Esophagus muscularis mucosa (tissue), 4 donors: ENCODE measurements at regions of chr10 and their contacts with region 1.

Region 1: DNA sequence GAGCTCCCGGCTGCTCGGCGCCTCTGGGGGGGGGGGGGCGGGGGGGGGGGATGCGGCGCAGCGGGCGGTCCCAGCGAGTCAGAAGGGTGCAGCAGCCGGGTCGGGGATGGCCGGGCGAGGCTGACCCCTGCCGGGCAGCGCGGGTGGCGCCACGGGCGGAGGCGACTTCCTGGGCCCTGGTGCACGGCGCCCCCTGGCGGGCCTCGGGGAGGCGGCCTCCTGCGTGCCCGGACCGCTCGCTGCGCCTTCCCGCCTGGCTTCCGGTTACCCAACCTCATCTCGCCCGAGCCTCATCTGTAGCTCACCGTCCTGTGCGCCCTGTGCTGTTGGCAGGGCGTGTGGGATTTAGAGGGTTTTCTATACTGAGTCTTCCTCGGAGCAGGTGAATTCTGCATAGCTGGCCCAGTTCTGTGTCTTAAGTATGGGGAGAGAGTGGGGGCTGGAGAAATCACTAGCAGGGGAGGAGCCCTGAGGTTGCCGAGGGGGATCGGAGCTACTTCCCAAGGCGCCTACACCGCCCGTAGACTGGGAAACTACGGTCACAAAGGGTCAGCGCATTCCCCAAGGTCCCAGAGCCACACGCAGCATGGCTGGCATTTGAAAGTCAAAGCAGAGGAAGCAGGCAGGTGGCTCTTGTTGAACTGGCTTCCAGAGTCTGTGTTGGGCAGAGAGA is 28.3 kb upstream of the WDFY4 start:
- DNase-seq: peak; percentile 97
- H3K4me3 ChIP-seq: peak overlapping the region; percentile 60 to 70 (median 62)
- H3K27ac ChIP-seq: peak overlapping the region; percentile 68 to 78 (median 70)
- H3K4me1 ChIP-seq: peaks cover 15 to 21% (median 19%) of the 10 kb centered on the region in 4 donors
- H3K27me3 ChIP-seq: peaks cover 0 to 7% (median 0%) of the 10 kb centered on the region in 4 donors
- CTCF ChIP-seq: peak; percentile 97 to 99 (median 98)
- EP300 ChIP-seq: no peak
- POLR2A ChIP-seq: no peak

Region 2: DNA sequence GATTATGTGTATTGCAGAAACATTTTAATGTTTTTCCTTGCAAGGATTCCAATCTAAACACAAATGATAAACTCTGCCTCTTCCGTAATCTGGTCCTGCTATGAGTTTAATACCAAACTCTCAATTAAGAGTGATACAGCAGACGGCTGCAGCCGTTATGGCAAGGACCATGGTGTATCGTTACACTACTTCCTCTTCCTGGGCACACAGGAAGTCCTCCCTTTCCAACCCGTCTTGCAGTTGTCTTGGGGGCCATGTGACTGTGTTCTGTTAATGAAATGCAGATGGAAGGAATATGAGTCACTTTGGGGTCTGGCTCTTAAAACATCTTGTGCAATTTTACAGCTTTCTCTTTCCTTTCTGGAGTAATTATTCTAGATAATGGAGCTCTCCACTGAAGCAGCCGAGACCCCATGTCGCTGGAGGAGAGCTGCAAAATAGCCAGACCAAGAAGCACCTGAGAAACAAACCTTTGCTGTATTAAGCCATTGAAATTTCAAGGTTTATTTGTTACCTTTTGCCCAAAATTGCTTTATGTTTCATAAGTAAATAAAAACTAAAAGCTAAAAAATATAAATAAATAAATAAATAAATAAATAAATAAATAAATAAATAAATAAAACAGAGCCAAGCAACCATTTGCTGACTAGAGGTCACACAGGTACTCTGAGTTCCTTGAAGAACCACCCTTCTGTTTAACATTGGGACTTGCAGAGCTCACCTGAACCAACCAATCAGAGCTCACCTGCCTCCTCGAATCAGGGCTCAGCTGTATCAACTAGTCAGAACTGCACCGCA is 456.6 kb before region 1 on chr10:
- intact Hi-C with region 1: no loop called
- DNase-seq: no peak
- H3K4me3 ChIP-seq: no peak overlapping the region
- H3K27ac ChIP-seq: no peak overlapping the region
- H3K4me1 ChIP-seq: no peaks in the 10 kb centered on the region
- H3K27me3 ChIP-seq: no peaks in the 10 kb centered on the region
- CTCF ChIP-seq: no peak
- EP300 ChIP-seq: no peak
- POLR2A ChIP-seq: no peak

Region 3: DNA sequence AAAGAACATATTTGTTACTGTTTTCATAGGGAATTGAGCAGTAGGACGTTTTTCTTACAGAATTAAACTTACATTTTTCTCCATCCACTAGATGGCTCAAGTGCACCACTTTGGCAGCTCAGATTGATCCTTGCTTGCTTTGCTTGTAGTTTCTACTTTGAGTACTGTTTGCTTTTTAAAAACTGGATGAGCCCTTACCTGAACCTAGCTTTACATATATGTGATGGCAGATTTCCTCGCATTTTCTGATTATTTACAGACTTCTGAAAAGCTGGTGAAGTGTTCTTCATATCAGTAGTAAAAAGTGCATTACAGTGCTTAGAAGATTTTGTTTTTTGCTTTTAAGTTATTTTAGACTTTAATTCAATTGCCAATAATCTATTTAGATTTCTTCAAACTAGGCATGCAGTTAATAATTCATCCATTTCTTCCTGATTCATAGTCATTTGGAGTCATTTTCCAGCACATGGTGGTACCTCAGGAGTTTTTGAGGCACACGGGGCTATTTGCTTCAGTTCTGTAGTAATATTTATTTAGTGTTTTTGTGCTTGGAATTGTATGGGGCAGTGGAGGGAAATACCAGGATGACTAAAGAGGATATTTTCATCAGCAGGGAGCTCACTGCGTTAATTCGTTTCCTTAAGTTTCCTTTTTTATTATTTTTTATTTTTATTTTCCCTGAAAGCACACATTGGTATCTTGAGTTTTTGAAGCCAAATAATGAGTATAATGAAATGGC is 292.6 kb before region 1 on chr10:
- intact Hi-C with region 1: loop called (anchors 2 kb)
- DNase-seq: no peak
- H3K4me3 ChIP-seq: no peak overlapping the region
- H3K27ac ChIP-seq: no peak overlapping the region
- H3K4me1 ChIP-seq: peaks cover 10 to 40% (median 37%) of the 10 kb centered on the region in 4 donors
- H3K27me3 ChIP-seq: no peaks in the 10 kb centered on the region
- CTCF ChIP-seq: peak; percentile 53 to 69 (median 57)
- EP300 ChIP-seq: no peak
- POLR2A ChIP-seq: no peak

Region 4: GRCh38 chr10:48551861-48552591 is 104.4 kb before region 1 on chr10:
- intact Hi-C with region 1: loop called (anchors 2 kb)
- DNase-seq: no peak
- H3K4me3 ChIP-seq: no peak overlapping the region
- H3K27ac ChIP-seq: no peak overlapping the region
- H3K4me1 ChIP-seq: peaks cover 6 to 27% (median 21%) of the 10 kb centered on the region in 4 donors
- H3K27me3 ChIP-seq: no peaks in the 10 kb centered on the region
- CTCF ChIP-seq: peak; percentile 56 to 65 (median 62)
- EP300 ChIP-seq: no peak
- POLR2A ChIP-seq: no peak